ENCODE measurements at regions of chr1 and their contacts with region 1.

Region 1: DNA sequence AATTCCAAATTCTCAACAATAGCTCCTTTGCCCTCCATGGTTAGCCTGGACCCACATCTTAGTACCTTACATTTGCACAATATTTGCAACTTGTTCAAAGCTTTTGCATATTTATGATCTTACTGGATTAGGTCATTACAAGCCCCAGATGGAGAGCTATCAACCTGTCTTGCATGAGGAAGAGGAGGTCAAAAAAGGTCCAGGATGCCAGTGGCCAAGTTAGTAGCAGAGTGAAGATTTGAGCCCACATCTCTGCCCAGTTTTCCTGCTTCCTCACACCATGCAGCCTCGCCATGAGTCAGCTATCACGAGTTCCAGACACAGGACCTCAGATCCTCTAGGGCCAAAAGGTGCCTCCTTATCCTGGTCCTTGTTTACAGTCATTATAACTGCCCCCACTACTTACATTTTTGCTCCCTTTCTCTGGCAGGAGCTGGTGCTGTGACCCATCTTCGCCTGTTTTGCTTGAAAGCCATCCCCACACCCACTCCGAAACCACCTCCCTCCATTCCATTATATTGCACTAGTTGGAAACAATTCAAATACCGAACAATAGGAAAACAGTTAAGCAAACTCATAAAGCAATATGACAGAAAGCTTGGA is 5.0 kb upstream of the AHCYL1 start:
- DNase-seq: peak; percentile 66 to 93
- H3K4me3 ChIP-seq: peak overlapping the region; percentile 6; the same call in 1 of the 2 replicates
- H3K27ac ChIP-seq: peak overlapping the region; percentile 84
- H3K4me1 ChIP-seq: peaks cover 98% of the 10 kb centered on the region
- H3K27me3 ChIP-seq: no peaks in the 10 kb centered on the region
- CTCF ChIP-seq: no peak

Region 2: GRCh38 chr1:109931189-109931731 is 48.3 kb before region 1 on chr1:
- CTCF ChIA-PET with region 1: no interaction called
- POLR2A ChIA-PET with region 1: no interaction called
- intact Hi-C with region 1: loop called (anchors 1 kb)
- DNase-seq: peak; percentile 93
- H3K4me3 ChIP-seq: no peak overlapping the region; the same call in 1 of the 2 replicates
- H3K27ac ChIP-seq: peak overlapping the region; percentile 80
- H3K4me1 ChIP-seq: peaks cover 85% of the 10 kb centered on the region
- H3K27me3 ChIP-seq: no peaks in the 10 kb centered on the region
- CTCF ChIP-seq: no peak

Region 3: DNA sequence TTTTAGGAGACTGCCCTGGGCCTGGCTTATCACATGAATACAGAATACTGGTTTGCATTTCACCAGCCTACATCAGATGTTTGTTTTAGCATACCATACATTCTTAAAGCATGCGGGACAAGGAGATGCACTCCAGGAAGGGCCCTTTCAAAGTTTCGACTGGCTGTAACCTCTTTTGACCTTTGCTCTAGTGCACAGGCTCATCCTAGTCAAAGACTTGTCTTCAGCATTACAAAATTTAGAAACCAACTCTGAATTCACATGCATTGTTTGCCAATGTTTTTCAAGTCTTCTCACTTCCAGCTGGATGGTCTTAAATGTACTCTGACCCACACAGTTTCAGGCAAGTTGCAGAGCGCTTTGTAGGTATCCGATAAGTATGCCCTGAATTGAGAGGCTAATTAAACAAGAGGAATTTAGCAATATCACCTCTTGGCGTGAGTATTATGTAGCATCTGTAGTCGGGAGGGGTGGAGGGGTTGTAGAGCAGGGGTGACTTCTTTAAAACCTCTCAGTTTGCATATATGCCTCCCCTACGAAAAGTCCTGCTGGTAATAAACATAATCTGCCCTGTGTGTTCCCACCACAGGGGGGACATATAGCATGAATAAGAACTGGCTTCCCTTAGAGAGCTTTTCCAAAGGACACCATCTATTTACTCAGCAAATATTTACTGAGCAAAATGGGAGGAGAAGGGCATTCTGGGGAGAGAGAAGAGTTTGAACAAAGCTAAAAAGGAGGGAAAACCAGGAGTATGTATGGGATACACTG is 19.4 kb before region 1 on chr1:
- CTCF ChIA-PET with region 1: interaction called, 7 read pairs
- POLR2A ChIA-PET with region 1: interaction called, 15 read pairs
- intact Hi-C with region 1: loop called (anchors 2 kb)
- DNase-seq: peak; percentile 59 to 99
- H3K4me3 ChIP-seq: peak overlapping the region; percentile 16; the same call in 1 of the 2 replicates
- H3K27ac ChIP-seq: peak overlapping the region; percentile 97
- H3K4me1 ChIP-seq: peaks cover 57% of the 10 kb centered on the region
- H3K27me3 ChIP-seq: no peaks in the 10 kb centered on the region
- CTCF ChIP-seq: peak; percentile 58

Measured in PC-9 (cell line).